ENCODE measurements at regions of chr3 and their contacts with region 1.

Region 1: GRCh38 chr3:79497447-79498111 is 270.2 kb downstream of the ROBO1 start:
- DNase-seq: no peak
- ATAC-seq: no peak
- H3K4me3 ChIP-seq: no peak overlapping the region
- H3K27ac ChIP-seq: no peak overlapping the region
- H3K4me1 ChIP-seq: no peaks in the 10 kb centered on the region
- H3K27me3 ChIP-seq: no peaks in the 10 kb centered on the region
- CTCF ChIP-seq: peak in 2 of 3 experiments; percentile 47 to 57; a peak in 4 of 6 replicates
- POLR2A ChIP-seq: no peak
- RAD21 ChIP-seq: peak; percentile 17; the same call in 1 of the 2 replicates

Region 2: GRCh38 chr3:78659386-78659987 is 838.1 kb before region 1 on chr3:
- CTCF ChIA-PET with region 1: no interaction called
- POLR2A ChIA-PET with region 1: no interaction called
- RAD21 ChIA-PET with region 1: no interaction called
- intact Hi-C with region 1: loop called (anchors 2 kb)
- DNase-seq: peak; percentile 2
- ATAC-seq: no peak
- H3K4me3 ChIP-seq: no peak overlapping the region
- H3K27ac ChIP-seq: no peak overlapping the region
- H3K4me1 ChIP-seq: no peaks in the 10 kb centered on the region
- H3K27me3 ChIP-seq: no peaks in the 10 kb centered on the region
- CTCF ChIP-seq: peak; percentile 14 to 44 (median 32); a peak in 3 of 6 replicates
- POLR2A ChIP-seq: no peak
- RAD21 ChIP-seq: peak; percentile 38